ENCODE measurements at regions of chr6 and their contacts with region 1.

Region 1: GRCh38 chr6:29797135-29797534 is 30.5 kb upstream of the HLA-G start:
- DNase-seq: no peak
- ATAC-seq: no peak
- H3K4me3 ChIP-seq: no peak overlapping the region
- H3K27ac ChIP-seq: no peak overlapping the region
- H3K4me1 ChIP-seq: peaks cover 0 to 12% (median 3%) of the 10 kb centered on the region in 12 donors
- H3K27me3 ChIP-seq: peaks cover 0 to 35% (median 6%) of the 10 kb centered on the region in 9 donors
- CTCF ChIP-seq: no peak
- POLR2A ChIP-seq: no peak

Region 2: GRCh38 chr6:29953001-29953441 is 155.9 kb after region 1 on chr6:
- intact Hi-C with region 1: loop called in 1 of 10 experiments (anchors 5 kb)
- DNase-seq: peak in 3 of 5 donors; percentile 65 to 74 (median 71)
- ATAC-seq: peak; percentile 68 to 85 (median 76)
- H3K4me3 ChIP-seq: no peak overlapping the region
- H3K27ac ChIP-seq: peak overlapping the region in 5 of 12 donors; percentile 23 to 73 (median 54)
- H3K4me1 ChIP-seq: peaks cover 0 to 15% (median 1%) of the 10 kb centered on the region in 12 donors
- H3K27me3 ChIP-seq: no peaks in the 10 kb centered on the region
- CTCF ChIP-seq: no peak
- POLR2A ChIP-seq: no peak